Common myeloid progenitor, CD34-positive (primary cell): ENCODE measurements at regions of chr3 and their contacts with region 1.

Region 1: GRCh38 chr3:170307671-170308403 is 49.7 kb upstream of the SKIL start:
- DNase-seq: no peak
- H3K4me3 ChIP-seq: no peak overlapping the region
- H3K27ac ChIP-seq: no peak overlapping the region
- H3K4me1 ChIP-seq: no peaks in the 10 kb centered on the region
- H3K27me3 ChIP-seq: no peaks in the 10 kb centered on the region

Region 2: DNA sequence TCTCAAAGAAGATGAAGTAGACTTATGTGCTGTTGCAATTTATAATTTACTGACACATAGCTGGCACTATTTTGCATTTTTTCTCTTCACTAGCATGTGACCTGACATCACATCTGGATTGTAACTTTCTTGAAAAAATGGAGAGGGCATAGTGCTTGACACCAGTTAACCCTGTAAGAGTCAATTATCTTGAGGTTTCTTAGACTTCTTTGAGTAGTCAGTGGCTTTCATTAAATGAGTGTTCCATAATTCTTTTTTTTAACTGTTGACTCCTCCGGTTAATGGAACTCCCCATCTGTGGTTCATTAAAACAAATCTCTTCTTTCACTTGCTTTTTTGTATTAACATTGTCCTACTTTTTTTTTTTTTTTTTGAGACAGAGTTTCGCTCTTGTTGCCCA is 102.5 kb before region 1 on chr3:
- CTCF ChIA-PET with region 1: no interaction called
- POLR2A ChIA-PET with region 1: no interaction called
- DNase-seq: no peak
- H3K4me3 ChIP-seq: no peak overlapping the region
- H3K27ac ChIP-seq: no peak overlapping the region
- H3K4me1 ChIP-seq: no peaks in the 10 kb centered on the region
- H3K27me3 ChIP-seq: no peaks in the 10 kb centered on the region

Region 3: GRCh38 chr3:170357176-170357919 is 49.5 kb after region 1 on chr3 and contains the start of gene SKIL:
- CTCF ChIA-PET with region 1: interaction called, 10 read pairs
- POLR2A ChIA-PET with region 1: interaction called, 13 read pairs
- DNase-seq: peak; percentile 97 to 98 (median 98)
- H3K4me3 ChIP-seq: peak within 1 kb of the TSS; percentile 69 to 87 (median 80)
- H3K27ac ChIP-seq: peak within 1 kb of the TSS; percentile 90 to 97
- H3K4me1 ChIP-seq: peaks cover 12 to 42% (median 22%) of the 10 kb centered on the region in 4 experiments
- H3K27me3 ChIP-seq: no peaks in the 10 kb centered on the region

Region 4: GRCh38 chr3:170368921-170369320 is 61.1 kb after region 1 on chr3:
- CTCF ChIA-PET with region 1: interaction called, 11 read pairs
- POLR2A ChIA-PET with region 1: interaction called, 3 read pairs
- DNase-seq: peak; percentile 14 to 45 (median 41)
- H3K4me3 ChIP-seq: no peak overlapping the region
- H3K27ac ChIP-seq: no peak overlapping the region
- H3K4me1 ChIP-seq: no peaks in the 10 kb centered on the region
- H3K27me3 ChIP-seq: no peaks in the 10 kb centered on the region

Region 5: GRCh38 chr3:170414202-170414663 is 106.4 kb after region 1 on chr3:
- CTCF ChIA-PET with region 1: interaction called, 13 read pairs
- POLR2A ChIA-PET with region 1: no interaction called
- DNase-seq: peak; percentile 63 to 80 (median 77)
- H3K4me3 ChIP-seq: no peak overlapping the region
- H3K27ac ChIP-seq: no peak overlapping the region
- H3K4me1 ChIP-seq: peaks cover 0 to 12% (median 10%) of the 10 kb centered on the region in 4 experiments
- H3K27me3 ChIP-seq: peaks cover 0 to 32% (median 17%) of the 10 kb centered on the region in 5 experiments